Ascending aorta (tissue), 2 donors: ENCODE measurements at regions of chrX and their contacts with region 1.

Region 1: GRCh38 chrX:18886344-18887161 is 97.4 kb downstream of the PHKA2 start:
- DNase-seq: peak; percentile 60 to 91
- H3K4me3 ChIP-seq: peak overlapping the region; percentile 34 to 56
- H3K27ac ChIP-seq: peak overlapping the region; percentile 92 to 97
- H3K4me1 ChIP-seq: peaks cover 7 to 22% of the 10 kb centered on the region in 2 donors
- H3K27me3 ChIP-seq: no peaks in the 10 kb centered on the region
- CTCF ChIP-seq: peak; percentile 63 to 66 (median 65)

Region 2: DNA sequence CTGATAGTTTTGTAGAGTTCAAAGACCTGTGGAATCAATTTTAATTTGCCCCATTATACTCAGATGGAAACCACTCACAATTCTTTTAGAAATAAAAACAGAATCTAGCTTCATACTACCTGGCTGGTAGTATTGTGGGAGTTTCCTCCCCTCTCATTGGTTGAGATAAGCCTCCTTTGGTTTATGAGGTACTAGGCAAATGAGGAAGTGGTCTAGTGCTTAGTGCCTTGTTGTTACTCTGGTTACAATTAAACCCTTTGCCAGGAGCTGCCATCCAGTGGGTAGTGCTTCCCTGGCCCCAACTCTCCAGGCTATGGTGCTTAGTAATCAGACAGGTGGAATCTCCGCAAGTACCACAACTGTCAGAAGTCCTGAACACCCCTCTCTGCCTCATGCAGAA is 342.8 kb before region 1 on chrX:
- intact Hi-C with region 1: loop called (anchors 5 kb)
- DNase-seq: no peak
- H3K4me3 ChIP-seq: no peak overlapping the region
- H3K27ac ChIP-seq: peak overlapping the region; percentile 16 to 63
- H3K4me1 ChIP-seq: peaks cover 0 to 2% of the 10 kb centered on the region in 2 donors
- H3K27me3 ChIP-seq: no peaks in the 10 kb centered on the region
- CTCF ChIP-seq: no peak

Region 3: DNA sequence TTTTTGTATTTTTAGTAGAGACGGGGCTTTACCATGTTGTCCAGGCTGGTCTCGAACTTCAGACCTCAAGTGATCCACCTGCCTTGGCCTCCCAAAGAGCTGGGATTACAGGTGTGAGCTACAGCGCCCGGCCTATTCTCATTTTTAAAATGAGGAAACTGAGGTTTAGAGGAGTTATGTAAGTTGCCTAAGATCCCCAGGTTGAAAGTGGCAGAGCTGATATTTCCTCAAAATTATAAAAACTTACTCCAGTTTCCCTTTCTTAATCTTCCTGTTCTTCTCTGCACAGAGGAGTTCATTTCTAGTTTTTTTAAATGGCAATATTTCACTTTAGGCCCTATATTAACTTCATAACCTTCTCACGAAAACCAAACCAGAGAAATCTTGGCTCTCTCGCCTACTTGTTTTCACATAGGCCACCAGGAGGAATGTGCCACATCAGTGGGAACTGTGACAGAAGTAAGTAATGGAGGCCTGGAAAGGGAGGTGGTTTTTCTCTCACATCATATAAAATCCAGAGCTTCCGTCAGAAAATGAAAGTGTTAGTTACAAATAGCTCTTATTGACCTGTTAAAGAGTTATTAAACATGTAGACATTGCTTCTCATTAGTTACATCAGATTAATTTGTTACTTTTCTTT is 198.6 kb before region 1 on chrX:
- intact Hi-C with region 1: loop called (anchors 2 kb)
- DNase-seq: no peak
- H3K4me3 ChIP-seq: no peak overlapping the region
- H3K27ac ChIP-seq: no peak overlapping the region
- H3K4me1 ChIP-seq: peaks cover 0 to 2% of the 10 kb centered on the region in 2 donors
- H3K27me3 ChIP-seq: no peaks in the 10 kb centered on the region
- CTCF ChIP-seq: no peak

Region 4: DNA sequence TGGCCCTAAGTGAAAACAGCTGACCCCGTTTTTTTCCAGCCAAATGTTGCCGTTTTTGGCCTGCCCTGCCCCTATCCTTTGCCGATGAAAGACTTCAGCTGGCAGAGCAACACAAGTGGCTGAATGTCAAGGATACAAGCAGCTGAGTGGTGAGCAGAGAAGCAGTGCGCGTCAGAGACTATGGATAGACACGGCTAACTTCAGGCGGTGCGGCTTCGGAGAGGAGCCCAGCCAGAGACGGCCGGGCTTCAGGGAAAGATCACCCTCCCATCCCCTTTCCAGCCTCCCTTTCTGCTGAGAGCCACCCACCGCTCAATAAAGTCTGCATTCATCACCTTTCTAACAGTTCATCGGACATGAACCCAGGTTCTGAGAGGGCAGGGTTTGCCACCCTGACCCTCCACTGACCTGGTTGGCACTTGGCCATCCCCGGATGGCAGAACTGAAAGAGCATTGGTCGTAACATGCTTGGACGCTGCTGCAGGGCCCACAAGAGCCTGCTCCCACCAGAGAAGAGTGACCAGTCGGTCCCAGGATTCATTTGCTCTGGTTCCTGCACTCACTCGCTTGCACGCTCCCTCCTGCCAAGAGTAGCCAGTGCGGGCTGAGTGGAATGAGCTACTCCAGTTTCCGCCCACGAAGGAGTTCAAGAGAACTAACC is 53.4 kb before region 1 on chrX:
- intact Hi-C with region 1: loop called (anchors 2 kb)
- DNase-seq: peak; percentile 11 to 79
- H3K4me3 ChIP-seq: peak overlapping the region in 1 of 2 donors; percentile 37
- H3K27ac ChIP-seq: peak overlapping the region; percentile 65 to 72
- H3K4me1 ChIP-seq: no peaks in the 10 kb centered on the region
- H3K27me3 ChIP-seq: no peaks in the 10 kb centered on the region
- CTCF ChIP-seq: no peak

Region 5: DNA sequence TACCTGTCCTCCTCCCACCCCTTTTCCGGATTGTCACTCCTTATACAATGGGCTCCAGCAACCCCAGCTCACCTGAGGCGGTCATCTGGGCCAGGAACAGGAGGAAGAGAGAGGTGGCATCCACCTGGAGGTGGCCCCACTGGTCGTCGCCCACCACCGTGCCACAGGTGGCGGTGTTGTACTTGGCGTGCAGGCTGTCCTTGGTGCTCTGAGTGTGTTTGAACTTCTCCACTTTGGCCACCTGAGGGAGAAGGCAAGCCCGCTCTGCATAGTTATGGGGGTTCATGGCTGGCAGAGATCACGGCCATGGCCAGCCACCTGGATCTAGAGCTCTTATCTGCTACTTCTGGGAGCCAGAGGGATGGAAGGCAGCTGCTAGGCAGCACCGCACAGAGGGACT is 64.5 kb after region 1 on chrX:
- intact Hi-C with region 1: no loop called
- DNase-seq: no peak
- H3K4me3 ChIP-seq: no peak overlapping the region
- H3K27ac ChIP-seq: no peak overlapping the region
- H3K4me1 ChIP-seq: no peaks in the 10 kb centered on the region
- H3K27me3 ChIP-seq: no peaks in the 10 kb centered on the region
- CTCF ChIP-seq: no peak

Region 6: DNA sequence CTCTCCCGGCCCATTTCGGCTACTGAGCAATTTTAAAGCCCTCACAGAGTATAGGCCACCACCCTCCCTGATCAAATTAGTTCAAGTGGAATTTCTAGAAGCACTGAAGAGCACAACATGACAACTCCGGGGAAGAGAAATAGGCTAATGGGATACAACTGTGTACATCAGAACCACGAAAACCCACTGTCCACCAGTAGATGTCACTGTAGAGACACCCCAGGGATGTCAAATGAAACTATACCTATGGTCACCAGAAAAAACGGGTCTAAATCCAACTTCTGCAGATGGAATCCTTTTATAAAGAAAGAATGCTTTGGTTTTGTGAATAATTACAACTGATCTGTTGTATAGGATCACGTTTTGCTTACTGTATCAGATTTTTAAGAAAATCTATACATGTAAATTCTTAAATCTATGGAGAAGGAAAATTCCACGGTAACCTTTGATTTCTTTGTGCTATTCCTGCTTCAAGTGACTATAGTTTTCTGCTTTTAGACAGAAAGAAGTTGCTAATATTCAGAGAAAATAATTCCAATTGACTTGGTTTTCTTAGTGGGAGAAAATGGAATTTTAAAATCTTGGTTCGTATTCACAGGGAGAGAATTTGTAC is 658.2 kb after region 1 on chrX:
- intact Hi-C with region 1: no loop called
- DNase-seq: no peak
- H3K4me3 ChIP-seq: no peak overlapping the region
- H3K27ac ChIP-seq: no peak overlapping the region
- H3K4me1 ChIP-seq: no peaks in the 10 kb centered on the region
- H3K27me3 ChIP-seq: no peaks in the 10 kb centered on the region
- CTCF ChIP-seq: peak; percentile 44 to 71 (median 60)